Posterior vena cava (tissue), 2 donors: ENCODE measurements at regions of chr15 and their contacts with region 1.

Region 1: DNA sequence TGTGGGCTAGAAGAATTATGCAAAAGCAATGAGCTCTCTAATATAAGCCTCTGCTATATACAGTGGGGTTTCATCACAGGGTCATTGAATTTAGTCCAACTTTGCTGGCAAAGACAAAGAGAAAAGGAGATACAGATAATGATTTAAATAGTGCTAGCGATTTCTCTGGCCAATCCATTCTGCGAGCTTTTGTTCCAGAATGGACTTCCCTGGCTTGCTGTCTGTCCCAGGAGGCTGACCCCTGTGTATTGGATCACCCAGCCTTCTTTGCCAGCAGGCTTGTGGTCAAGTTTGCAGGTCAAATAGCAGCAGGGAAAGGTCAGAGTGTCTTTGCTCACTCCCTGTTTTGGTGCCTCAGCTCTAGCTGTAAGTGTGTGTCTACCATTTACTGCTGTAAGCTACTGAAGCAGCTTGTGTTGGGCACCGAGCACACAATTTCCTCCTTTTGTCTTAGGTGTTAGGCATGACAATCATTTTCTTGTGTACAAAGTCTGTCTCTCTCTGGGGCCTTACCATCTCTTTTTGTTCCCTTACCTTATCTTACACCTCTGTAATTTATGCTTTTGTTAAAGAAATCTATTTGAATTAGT is 55.7 kb downstream of the UNC13C start:
- DNase-seq: no peak

Region 2: GRCh38 chr15:53171559-53171958 is 862.4 kb before region 1 on chr15:
- intact Hi-C with region 1: loop called in 1 of 2 experiments (anchors 10 kb)
- DNase-seq: no peak

Region 3: GRCh38 chr15:54017959-54018358 is 16.0 kb before region 1 on chr15:
- intact Hi-C with region 1: no loop called
- DNase-seq: no peak